Caco-2 (cell line): ENCODE measurements at regions of chr1 and their contacts with region 1.

Region 1: GRCh38 chr1:194809665-194810064 is 1623.3 kb upstream of the B3GALT2 start:
- DNase-seq: no peak
- H3K4me3 ChIP-seq: no peak overlapping the region
- H3K4me3 Mint-ChIP-seq: no peak overlapping the region
- H3K27ac Mint-ChIP-seq: no peak overlapping the region
- H3K4me1 ChIP-seq: no peaks in the 10 kb centered on the region
- H3K4me1 Mint-ChIP-seq: no peaks in the 10 kb centered on the region
- H3K27me3 ChIP-seq: no peaks in the 10 kb centered on the region
- H3K27me3 Mint-ChIP-seq: no peaks in the 10 kb centered on the region
- CTCF ChIP-seq: no peak

Region 2: DNA sequence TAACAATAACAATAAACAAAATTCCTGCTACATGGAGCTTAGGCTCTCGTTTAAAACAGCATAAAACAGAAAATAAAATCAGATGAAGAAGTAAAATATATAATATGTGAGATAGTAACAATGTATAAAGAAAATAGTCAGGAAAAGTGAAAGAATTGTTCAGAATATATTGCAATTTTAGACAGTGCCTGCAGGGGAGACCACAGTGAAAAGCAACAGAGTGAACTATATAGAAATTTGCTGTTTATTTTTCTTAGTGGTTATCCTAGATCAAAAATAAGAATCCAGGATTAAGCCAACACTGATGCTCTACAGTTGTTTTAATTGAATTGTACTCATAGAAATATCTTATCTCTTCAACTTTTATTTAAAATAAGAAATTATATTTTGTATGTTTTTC is 15.7 kb after region 1 on chr1:
- CTCF ChIA-PET with region 1: no interaction called
- POLR2A ChIA-PET with region 1: no interaction called
- intact Hi-C with region 1: no loop called
- DNase-seq: no peak
- H3K4me3 ChIP-seq: no peak overlapping the region
- H3K4me3 Mint-ChIP-seq: no peak overlapping the region
- H3K27ac Mint-ChIP-seq: no peak overlapping the region
- H3K4me1 ChIP-seq: no peaks in the 10 kb centered on the region
- H3K4me1 Mint-ChIP-seq: no peaks in the 10 kb centered on the region
- H3K27me3 ChIP-seq: no peaks in the 10 kb centered on the region
- H3K27me3 Mint-ChIP-seq: no peaks in the 10 kb centered on the region
- CTCF ChIP-seq: no peak

Region 3: GRCh38 chr1:195717651-195718050 is 908.0 kb after region 1 on chr1:
- CTCF ChIA-PET with region 1: no interaction called
- POLR2A ChIA-PET with region 1: no interaction called
- intact Hi-C with region 1: loop called (anchors 10 kb)
- DNase-seq: no peak
- H3K4me3 ChIP-seq: no peak overlapping the region
- H3K4me3 Mint-ChIP-seq: no peak overlapping the region
- H3K27ac Mint-ChIP-seq: no peak overlapping the region
- H3K4me1 ChIP-seq: no peaks in the 10 kb centered on the region
- H3K4me1 Mint-ChIP-seq: no peaks in the 10 kb centered on the region
- H3K27me3 ChIP-seq: no peaks in the 10 kb centered on the region
- H3K27me3 Mint-ChIP-seq: peaks cover 3% of the 10 kb centered on the region
- CTCF ChIP-seq: peak in 1 of 2 experiments; percentile 27